Common myeloid progenitor, CD34-positive (primary cell): ENCODE measurements at regions of chr3 and their contacts with region 1.

Region 1: DNA sequence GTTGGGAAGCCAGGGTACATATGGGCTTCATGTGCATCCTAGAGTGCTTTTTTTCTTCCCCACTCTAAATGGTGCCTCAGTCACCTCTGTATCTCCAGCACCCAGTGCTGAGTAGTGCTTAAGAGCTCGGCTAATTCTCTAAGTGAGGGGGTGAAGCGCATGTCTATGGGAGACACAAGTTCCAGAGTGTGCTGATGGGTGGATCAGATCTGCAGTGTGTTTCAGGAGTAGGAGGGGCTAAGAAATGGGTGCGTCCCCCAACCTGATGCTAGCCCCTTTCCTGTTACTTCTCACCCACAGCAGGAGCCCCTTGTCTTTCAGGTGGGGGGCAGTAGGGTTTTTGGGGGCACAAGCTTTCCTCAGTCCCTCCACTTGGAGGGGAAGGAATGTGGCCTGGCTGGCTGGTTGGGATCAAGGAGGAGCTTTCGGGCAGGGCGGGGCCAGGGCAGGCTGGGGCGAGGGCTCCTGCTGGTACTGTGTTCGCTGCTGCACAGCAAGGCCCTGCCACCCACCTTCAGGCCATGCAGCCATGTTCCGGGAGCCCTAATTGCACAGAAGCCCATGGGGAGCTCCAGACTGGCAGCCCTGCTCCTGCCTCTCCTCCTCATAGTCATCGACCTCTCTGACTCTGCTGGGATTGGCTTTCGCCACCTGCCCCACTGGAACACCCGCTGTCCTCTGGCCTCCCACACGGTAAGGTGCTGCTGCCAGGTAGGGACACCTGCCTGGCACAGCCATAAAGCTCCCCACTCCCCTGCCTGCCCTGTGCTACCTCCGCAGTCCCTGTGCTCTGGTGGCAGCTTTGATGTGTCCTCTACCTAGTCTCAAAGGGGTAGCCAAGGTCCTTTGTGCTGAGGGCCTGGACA is at the start of gene IL17RE:
- DNase-seq: no peak
- H3K4me3 ChIP-seq: peak within 1 kb of the TSS in 6 of 7 experiments; percentile 1 to 53 (median 22)
- H3K27ac ChIP-seq: no peak within 1 kb of the TSS
- H3K4me1 ChIP-seq: peaks cover 7 to 64% (median 48%) of the 10 kb centered on the region in 4 experiments
- H3K27me3 ChIP-seq: no peaks in the 10 kb centered on the region

Region 2: DNA sequence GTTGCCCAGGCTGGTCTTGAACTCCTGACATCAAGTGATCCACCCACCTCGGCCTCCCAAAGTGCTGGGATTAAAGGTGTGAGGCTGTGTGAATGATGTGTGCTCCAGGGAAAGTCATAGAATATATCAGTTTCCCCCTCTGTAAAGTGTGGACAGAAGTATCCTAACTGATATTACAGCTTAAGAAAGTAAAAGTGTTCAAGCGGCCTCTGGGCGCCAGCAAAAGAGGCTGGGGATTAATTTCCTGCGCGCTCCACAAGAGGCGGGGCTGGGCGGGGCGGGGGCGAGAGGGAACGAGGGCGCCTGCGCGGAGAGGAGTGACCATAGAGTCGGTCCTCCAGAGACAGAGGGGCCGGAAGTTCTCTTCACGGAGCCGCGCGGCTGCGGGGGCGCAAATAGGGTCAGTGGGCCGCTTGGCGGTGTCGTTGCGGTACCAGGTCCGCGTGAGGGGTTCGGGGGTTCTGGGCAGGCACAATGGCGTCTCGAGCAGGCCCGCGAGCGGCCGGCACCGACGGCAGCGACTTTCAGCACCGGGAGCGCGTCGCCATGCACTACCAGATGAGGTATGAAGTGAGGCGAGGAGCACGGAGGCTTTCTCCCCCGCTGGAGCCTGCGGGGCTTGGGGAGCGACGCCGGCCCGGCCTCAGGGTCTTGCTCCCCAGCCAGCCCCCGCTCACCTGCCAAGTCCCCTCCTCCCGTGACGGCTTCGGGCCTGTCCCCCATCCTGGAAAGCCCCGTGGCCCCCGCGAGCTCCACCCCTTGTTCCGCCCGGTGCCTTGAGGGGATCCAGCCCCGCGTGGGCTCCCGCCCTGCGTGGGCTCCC is 12.1 kb before region 1 on chr3 and contains the start of gene JAGN1:
- CTCF ChIA-PET with region 1: interaction called, 12 read pairs
- POLR2A ChIA-PET with region 1: interaction called, 4 read pairs
- DNase-seq: peak; percentile 91 to 93 (median 93)
- H3K4me3 ChIP-seq: peak within 1 kb of the TSS; percentile 69 to 99 (median 92)
- H3K27ac ChIP-seq: peak within 1 kb of the TSS; percentile 97
- H3K4me1 ChIP-seq: peaks cover 17 to 38% (median 30%) of the 10 kb centered on the region in 4 experiments
- H3K27me3 ChIP-seq: no peaks in the 10 kb centered on the region

Region 3: GRCh38 chr3:9915254-9916141 is 12.9 kb after region 1 on chr3:
- CTCF ChIA-PET with region 1: interaction called, 48 read pairs
- POLR2A ChIA-PET with region 1: interaction called, 11 read pairs
- DNase-seq: peak in 2 of 3 donors; percentile 47 to 63
- H3K4me3 ChIP-seq: peak overlapping the region; percentile 36 to 83 (median 68)
- H3K27ac ChIP-seq: no peak overlapping the region
- H3K4me1 ChIP-seq: peaks cover 4 to 57% (median 55%) of the 10 kb centered on the region in 4 experiments
- H3K27me3 ChIP-seq: no peaks in the 10 kb centered on the region